ENCODE measurements at regions of chr9 and their contacts with region 1.

Region 1: GRCh38 chr9:114691046-114691955 is 9.3 kb upstream of the TEX48 start:
- DNase-seq: peak; percentile 87
- H3K4me3 Mint-ChIP-seq: peak overlapping the region; percentile 26
- H3K27ac Mint-ChIP-seq: peak overlapping the region; percentile 93
- H3K4me1 Mint-ChIP-seq: peaks cover 95% of the 10 kb centered on the region
- H3K27me3 Mint-ChIP-seq: peaks cover 33% of the 10 kb centered on the region

Region 2: DNA sequence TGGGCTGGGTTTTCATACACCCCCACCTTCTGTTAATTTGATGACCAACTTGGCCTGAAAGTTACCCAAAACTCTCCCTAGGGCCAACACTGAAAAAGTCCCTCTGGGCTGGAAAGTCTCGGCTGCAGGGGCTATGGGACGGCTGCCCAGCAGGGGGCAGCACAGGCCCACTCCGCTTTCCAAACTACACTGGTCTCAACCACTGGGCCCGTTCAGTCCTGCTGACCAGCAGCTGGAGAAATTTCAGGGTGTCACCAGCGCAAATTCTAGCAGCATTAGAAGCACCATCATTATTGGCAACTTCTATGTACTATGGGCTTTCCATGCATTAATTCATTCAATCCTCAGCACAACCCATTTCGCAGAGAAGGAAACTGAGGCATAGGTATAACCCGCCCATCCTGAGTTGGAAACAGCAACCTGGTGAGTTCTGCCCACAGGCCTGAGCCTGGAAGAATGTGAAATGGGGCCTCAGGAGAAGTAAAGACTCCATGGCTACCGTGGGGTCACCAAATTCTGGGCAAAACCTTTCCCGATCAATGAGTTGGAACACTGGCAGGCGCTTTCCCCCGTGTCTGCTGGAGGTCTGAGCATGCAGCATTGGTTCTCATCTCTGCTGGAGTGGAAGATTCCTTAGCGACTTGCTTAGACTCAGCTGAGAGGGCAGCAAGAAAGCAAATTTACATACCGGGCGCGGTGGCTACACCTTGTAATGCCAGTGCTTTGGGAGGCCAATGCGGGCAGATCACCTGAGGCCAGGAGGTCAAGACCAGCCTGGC is 352.0 kb before region 1 on chr9:
- CTCF ChIA-PET with region 1: no interaction called
- POLR2A ChIA-PET with region 1: no interaction called
- DNase-seq: peak; percentile 60
- H3K4me3 Mint-ChIP-seq: no peak overlapping the region
- H3K27ac Mint-ChIP-seq: no peak overlapping the region
- H3K4me1 Mint-ChIP-seq: peaks cover 9% of the 10 kb centered on the region
- H3K27me3 Mint-ChIP-seq: no peaks in the 10 kb centered on the region

Region 3: DNA sequence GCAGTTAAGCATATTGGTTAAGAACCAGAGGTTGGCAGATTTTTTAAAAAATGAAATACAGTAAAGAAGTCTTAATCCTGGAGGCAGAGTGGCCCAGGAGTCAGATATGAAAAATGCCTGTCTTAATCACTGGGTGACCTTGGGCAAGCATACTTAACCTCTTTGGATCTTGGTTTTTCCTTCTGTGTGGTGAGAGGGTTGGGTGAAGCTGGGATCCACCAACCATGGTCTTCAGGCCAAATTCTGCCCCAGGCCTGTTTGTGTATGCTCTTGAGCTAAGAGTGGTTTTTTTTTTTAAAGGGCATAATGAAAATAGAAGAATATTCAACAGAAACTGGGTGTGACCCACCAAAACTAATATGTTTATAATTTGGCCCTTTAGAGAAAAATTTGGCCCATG is 10.7 kb after region 1 on chr9:
- CTCF ChIA-PET with region 1: interaction called, 51 read pairs
- POLR2A ChIA-PET with region 1: interaction called, 115 read pairs
- DNase-seq: no peak
- H3K4me3 Mint-ChIP-seq: no peak overlapping the region
- H3K27ac Mint-ChIP-seq: no peak overlapping the region
- H3K4me1 Mint-ChIP-seq: peaks cover 44% of the 10 kb centered on the region
- H3K27me3 Mint-ChIP-seq: peaks cover 25% of the 10 kb centered on the region

Region 4: DNA sequence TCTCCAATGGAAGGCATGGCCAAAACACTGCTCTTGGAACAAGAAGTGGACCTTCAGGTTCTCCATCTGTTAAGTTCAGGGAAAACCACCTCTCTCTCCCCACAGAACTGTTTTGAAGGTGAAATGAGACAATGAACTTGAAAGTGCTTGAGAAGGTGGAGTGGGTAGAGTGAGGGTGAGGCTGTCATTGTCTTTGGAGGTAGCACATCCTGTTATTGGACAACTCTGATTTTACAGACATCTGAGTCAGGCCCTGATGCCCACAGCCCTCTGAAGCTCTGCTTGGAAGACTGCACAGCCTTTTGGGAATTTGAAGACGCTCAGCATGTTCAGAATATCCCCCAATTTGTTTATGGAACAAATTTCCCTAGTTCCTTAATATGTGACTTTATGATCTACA is 18.3 kb after region 1 on chr9:
- CTCF ChIA-PET with region 1: interaction called, 51 read pairs
- POLR2A ChIA-PET with region 1: interaction called, 418 read pairs
- DNase-seq: no peak
- H3K4me3 Mint-ChIP-seq: no peak overlapping the region
- H3K27ac Mint-ChIP-seq: peak overlapping the region; percentile 56
- H3K4me1 Mint-ChIP-seq: peaks cover 43% of the 10 kb centered on the region
- H3K27me3 Mint-ChIP-seq: peaks cover 27% of the 10 kb centered on the region

Region 5: GRCh38 chr9:114718801-114719221 is 27.5 kb after region 1 on chr9:
- CTCF ChIA-PET with region 1: interaction called, 33 read pairs
- POLR2A ChIA-PET with region 1: interaction called, 418 read pairs
- DNase-seq: peak; percentile 98
- H3K4me3 Mint-ChIP-seq: peak overlapping the region; percentile 3
- H3K27ac Mint-ChIP-seq: peak overlapping the region; percentile 93
- H3K4me1 Mint-ChIP-seq: peaks cover 68% of the 10 kb centered on the region
- H3K27me3 Mint-ChIP-seq: peaks cover 20% of the 10 kb centered on the region

Region 6: DNA sequence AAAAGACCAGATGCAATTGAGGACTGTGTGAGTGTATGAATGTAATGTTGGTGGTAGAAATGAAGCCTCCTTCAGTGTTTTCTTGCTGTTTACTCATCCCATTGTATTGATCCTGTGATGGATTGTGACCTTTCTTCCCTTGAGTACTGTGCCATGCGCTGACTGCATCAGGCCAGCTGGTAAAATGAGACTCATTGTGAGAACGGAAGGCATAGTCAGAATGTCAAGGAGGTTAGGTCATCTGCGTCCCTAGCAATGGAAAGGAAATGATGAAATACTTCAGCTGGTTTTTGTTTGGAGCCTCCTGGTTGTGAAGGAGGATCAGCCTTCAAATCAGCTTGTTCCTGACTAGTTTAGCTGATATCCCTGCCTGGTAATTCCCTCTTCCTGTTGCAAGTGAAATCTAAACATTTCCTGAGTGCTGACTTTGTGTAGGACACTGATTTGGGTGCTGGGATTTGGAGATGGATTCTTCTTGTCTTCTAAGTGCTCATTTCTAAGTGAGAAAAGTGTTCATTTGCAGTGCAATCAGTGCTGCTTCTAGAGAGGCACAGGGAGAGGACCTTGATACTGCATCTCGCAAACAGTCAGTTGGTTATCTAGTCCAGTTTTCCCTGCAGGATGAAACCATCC is 203.6 kb after region 1 on chr9:
- CTCF ChIA-PET with region 1: interaction called, 3 read pairs
- POLR2A ChIA-PET with region 1: interaction called, 62 read pairs
- DNase-seq: peak; percentile 66
- H3K4me3 Mint-ChIP-seq: no peak overlapping the region
- H3K27ac Mint-ChIP-seq: peak overlapping the region; percentile 74
- H3K4me1 Mint-ChIP-seq: peaks cover 43% of the 10 kb centered on the region
- H3K27me3 Mint-ChIP-seq: no peaks in the 10 kb centered on the region